Endothelial cell of umbilical vein (primary cell): ENCODE measurements at regions of chr2 and their contacts with region 1.

Region 1: DNA sequence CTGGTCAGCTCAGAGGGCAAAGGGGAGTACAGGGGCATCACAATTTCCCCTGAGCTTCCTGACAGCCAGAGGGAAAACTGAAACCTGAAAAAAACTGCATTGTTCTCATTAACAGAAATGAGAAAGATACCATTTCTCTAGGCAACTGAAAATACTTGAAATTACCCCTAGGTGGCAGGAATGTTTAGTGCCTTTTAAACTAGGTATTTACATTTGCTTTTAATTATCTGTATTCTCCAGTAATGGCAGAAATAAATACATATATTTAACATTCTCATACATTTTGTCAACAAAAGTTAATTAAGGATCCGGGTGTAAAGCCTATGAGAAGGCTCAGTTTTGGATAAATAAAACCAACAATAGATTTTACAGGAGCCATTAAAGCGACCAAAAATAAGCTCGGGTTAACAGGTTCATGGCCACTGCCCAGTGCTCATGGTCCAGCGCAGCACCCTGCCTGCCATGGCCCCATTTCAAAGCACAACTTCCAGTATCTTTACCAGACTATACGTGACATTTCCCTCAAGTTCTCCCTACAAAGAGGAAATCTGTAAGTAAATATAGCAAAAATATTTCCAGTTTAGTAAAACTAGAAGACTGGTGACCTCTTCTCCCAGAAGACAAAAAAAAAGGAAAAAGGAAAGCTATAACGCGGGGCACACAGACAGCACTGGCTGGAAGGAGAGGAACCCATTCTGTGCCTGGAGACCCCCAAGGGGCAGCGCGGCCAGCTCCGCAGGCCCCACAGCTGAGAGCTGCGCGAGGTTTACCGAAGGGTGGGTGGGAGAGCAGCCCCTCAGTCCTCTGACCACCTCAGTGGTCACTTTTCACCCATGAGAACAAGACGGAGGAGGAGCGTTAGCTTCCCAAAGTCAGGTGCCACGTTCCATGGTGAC is 34.7 kb downstream of the RPL31 start:
- DNase-seq: peak; percentile 53
- H3K4me3 ChIP-seq: no peak overlapping the region
- H3K27ac ChIP-seq: no peak overlapping the region
- H3K4me1 ChIP-seq: no peaks in the 10 kb centered on the region
- H3K27me3 ChIP-seq: no peaks in the 10 kb centered on the region
- CTCF ChIP-seq: peak; percentile 24 to 40
- POLR2A ChIP-seq: no peak

Region 2: DNA sequence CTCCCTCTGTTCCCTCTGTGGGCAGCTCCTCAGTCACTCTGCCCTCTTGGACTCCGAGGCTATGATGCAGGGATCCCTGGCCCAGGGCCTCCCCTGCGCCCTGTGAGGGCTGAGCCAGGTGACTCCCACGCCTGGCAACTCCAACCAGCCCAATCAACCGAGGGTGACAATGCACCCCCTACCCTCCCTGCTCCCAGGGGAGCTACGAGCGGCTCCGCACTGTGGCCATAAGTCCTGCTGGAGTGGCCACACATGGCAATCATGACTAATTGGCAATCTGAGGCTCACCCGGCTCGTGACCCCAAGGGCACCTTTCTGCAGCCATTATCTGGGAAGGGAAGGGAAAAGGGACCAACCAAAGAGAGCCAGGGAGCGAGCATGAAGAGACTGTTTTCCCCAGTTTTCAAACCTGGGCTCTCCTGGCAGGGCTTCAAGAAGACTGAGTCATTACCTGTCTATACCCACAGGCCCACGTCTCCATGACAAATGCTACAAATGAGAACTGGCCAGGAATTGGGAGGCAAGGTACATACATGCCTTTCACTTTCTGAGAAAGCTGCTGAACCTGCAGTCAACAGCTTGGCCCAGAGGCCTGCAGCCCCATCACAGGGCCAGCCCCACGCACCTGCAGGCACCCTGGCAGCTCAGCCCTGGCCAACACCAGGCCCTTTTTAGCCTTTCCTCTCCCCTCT is 10.4 kb after region 1 on chr2:
- CTCF ChIA-PET with region 1: interaction called, 11 read pairs
- POLR2A ChIA-PET with region 1: interaction called, 3 read pairs
- dilution Hi-C with region 1: no loop called
- intact Hi-C with region 1: no loop called
- DNase-seq: peak; percentile 79
- H3K4me3 ChIP-seq: no peak overlapping the region
- H3K27ac ChIP-seq: peak overlapping the region; percentile 12
- H3K4me1 ChIP-seq: peaks cover 10% of the 10 kb centered on the region
- H3K27me3 ChIP-seq: no peaks in the 10 kb centered on the region
- CTCF ChIP-seq: no peak
- POLR2A ChIP-seq: no peak

Region 3: GRCh38 chr2:101140978-101141657 is 104.3 kb after region 1 on chr2:
- CTCF ChIA-PET with region 1: interaction called, 10 read pairs
- POLR2A ChIA-PET with region 1: no interaction called
- dilution Hi-C with region 1: no loop called
- intact Hi-C with region 1: no loop called
- DNase-seq: no peak
- H3K4me3 ChIP-seq: no peak overlapping the region
- H3K27ac ChIP-seq: no peak overlapping the region
- H3K4me1 ChIP-seq: no peaks in the 10 kb centered on the region
- H3K27me3 ChIP-seq: no peaks in the 10 kb centered on the region
- CTCF ChIP-seq: no peak
- POLR2A ChIP-seq: no peak

Region 4: GRCh38 chr2:101188683-101189405 is 152.0 kb after region 1 on chr2:
- CTCF ChIA-PET with region 1: interaction called, 98 read pairs
- POLR2A ChIA-PET with region 1: interaction called, 4 read pairs
- dilution Hi-C with region 1: no loop called
- intact Hi-C with region 1: loop called (anchors 1 kb)
- DNase-seq: peak; percentile 41
- H3K4me3 ChIP-seq: no peak overlapping the region
- H3K27ac ChIP-seq: no peak overlapping the region
- H3K4me1 ChIP-seq: no peaks in the 10 kb centered on the region
- H3K27me3 ChIP-seq: peaks cover 0 to 2% of the 10 kb centered on the region in 2 experiments
- CTCF ChIP-seq: peak; percentile 74 to 78
- POLR2A ChIP-seq: no peak